Esophagus muscularis mucosa (tissue), 4 donors: ENCODE measurements at regions of chr13 and their contacts with region 1.

Region 1: GRCh38 chr13:112873851-112874750 is 94.9 kb upstream of the MCF2L start:
- DNase-seq: peak; percentile 95
- H3K4me3 ChIP-seq: peak overlapping the region in 1 of 4 donors; percentile 21
- H3K27ac ChIP-seq: peak overlapping the region in 1 of 4 donors; percentile 37
- H3K4me1 ChIP-seq: peaks cover 6 to 12% (median 8%) of the 10 kb centered on the region in 4 donors
- H3K27me3 ChIP-seq: no peaks in the 10 kb centered on the region
- CTCF ChIP-seq: peak; percentile 84 to 95 (median 90)
- EP300 ChIP-seq: no peak
- POLR2A ChIP-seq: no peak

Region 2: DNA sequence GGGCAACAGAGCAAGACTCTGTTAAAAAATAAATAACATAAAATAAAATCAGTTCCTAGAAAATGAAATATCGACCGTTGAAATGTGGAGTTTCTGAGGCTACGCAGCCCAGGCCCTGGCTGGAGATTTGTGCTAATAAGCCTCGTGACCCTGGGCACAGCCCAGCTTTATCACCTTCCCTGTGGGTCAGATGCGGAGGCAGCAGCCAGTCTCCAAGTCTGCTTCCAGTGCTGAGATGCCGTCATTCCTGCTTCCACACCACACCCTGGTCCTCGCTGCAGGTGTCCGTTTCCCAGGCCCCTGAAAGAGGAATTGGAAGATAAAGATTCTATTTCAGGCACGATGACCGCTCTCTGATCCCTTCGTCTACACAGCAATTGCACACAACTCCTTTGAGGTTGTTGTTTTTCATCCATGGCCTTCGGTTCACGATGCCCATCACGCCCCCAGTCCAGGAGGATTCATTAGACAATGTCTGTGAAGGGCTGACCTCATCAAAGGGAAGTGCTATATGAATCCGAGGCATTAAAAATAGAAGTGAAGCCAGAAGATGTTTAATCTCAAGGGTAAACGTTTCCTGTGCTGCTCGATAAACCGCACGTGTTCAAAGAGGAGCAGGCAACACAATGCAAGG is 232.5 kb before region 1 on chr13:
- intact Hi-C with region 1: loop called (anchors 2 kb)
- DNase-seq: no peak
- H3K4me3 ChIP-seq: no peak overlapping the region
- H3K27ac ChIP-seq: no peak overlapping the region
- H3K4me1 ChIP-seq: peaks cover 0 to 7% (median 3%) of the 10 kb centered on the region in 4 donors
- H3K27me3 ChIP-seq: peaks cover 0 to 37% (median 2%) of the 10 kb centered on the region in 4 donors
- CTCF ChIP-seq: no peak
- EP300 ChIP-seq: no peak
- POLR2A ChIP-seq: no peak